Posterior cingulate gyrus (tissue), 11 donors: ENCODE measurements at regions of chr19 and their contacts with region 1.

Region 1: DNA sequence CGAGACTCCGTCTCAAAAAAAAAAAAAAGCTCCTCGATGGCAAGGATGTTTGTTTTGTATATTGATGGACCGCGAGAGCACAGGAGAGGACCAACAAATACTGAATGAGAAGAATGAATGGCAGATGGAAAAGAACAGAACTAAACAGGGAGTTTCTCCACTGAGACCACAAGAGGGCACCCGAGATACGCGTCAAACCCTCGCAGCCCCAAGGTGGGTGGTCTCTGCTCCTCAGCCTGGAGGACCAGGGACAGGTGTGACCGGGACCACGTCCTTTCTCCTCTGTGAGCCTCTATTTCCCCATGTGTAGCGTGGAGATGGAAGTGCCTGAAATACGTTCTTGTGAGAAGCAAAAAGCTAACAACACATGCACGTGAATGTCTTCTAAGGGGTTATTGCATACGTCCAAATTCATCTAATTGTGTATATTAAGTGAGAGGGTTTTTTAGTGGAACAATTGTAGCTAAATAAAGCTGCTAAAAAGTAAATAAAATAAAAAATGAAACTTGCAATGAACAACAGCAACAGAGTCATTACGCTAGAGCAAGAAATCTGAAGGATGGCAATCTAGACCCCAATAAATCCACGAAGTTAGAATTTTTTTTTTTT is 8.3 kb upstream of the CDC42EP5 start:
- DNase-seq: peak in 3 of 10 donors; percentile 18 to 84 (median 44)

Region 2: DNA sequence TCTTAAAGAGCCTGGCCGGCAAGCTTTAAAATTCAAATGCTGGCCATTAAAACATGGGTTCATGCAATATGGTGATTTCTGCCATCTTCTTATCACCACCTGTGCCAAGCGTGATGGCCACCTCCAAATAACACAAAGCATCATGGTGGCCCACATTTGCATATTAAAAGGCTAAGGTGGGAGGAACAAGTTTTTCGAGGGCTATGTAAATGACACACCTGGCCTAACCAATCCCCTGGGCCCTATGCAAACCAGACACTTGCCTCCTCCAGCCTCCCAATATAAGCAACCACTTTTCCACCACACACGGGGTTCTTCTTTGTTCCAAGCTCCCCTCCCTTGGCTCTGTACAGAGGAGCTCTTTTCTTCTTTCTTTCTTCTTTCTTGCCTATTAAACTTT is 195.8 kb after region 1 on chr19:
- intact Hi-C with region 1: loop called (anchors 2 kb)
- DNase-seq: no peak